ENCODE measurements at regions of chr9 and their contacts with region 1.

Region 1: DNA sequence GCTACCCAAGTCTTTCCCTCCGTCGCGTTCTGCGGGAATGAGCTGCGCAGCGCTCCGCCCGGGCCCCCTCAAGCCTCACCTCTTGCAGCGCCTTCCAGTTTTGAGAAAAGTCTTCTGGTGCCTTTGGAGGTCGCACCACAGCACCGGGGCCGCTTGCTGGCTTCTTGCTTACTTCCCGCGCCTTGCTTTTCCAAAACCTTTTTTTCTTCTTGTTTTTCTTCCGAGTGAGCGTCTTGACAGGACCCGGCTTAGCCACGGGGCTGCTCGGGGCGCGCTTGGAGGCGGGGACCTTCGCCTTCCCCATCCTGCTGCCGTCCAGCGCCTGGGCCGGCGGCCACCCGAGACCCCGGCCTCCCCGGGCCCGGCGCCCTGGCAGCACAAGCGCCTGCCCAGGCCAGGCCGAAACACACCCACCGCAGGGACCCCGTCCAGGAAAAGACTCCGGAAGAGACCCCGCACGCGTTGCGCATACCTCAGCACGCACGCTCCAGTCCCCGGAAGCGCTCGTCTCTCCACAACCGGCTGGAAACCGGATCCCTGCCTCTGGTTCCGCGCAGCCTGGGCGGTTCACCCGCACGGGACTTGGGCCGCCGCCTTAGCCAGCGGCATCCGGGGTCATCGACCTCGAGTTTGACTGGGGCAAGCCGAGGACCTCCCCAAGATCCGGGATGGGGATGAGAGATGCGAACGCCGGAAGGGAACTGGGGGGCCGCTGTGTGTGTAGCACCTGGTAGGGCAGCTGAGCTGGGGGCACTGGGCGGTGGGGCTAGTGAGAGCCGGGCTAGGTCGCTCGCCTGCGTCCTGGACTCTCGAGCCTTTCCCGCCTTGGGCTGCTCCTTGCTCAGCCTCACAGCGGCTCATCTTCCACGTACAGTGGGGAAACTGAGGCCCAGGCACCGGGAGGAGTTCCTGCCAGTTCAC is at the start of gene REXO4:
- DNase-seq: peak; percentile 96
- H3K4me3 ChIP-seq: peak within 1 kb of the TSS; percentile 69 to 88 (median 80)
- H3K27ac ChIP-seq: peak within 1 kb of the TSS; percentile 79 to 85 (median 84)
- H3K4me1 ChIP-seq: peaks cover 16 to 47% (median 33%) of the 10 kb centered on the region in 4 donors
- H3K27me3 ChIP-seq: no peaks in the 10 kb centered on the region
- CTCF ChIP-seq: peak in 1 of 3 experiments; percentile 19
- EP300 ChIP-seq: no peak
- POLR2A ChIP-seq: peak; percentile 12
- total RNA-seq, gene REXO4: 15.0 to 28.9 (median 22.4) TPM

Region 2: DNA sequence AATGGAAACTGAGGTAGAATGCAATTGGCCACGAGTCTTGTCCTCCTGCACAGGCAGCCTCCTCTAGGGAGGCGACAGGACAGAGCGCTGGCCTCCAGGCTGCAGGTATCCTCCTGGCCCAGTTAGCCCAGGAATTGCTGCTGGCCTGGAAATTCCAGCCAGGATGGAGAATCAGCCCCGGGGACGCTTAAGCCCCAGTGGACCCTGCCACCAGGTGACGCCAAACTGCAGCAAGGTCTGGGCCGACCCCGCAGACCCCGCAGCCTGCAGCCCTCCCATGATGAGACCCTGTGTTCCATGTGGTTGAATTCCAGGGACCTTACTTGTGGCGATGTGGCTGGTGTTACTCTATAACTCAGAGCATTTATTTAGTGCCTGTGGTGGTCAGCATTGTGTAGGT is 49.3 kb after region 1 on chr9:
- intact Hi-C with region 1: loop called (anchors 5 kb)
- DNase-seq: no peak
- H3K4me3 ChIP-seq: no peak overlapping the region
- H3K27ac ChIP-seq: no peak overlapping the region
- H3K4me1 ChIP-seq: no peaks in the 10 kb centered on the region
- H3K27me3 ChIP-seq: no peaks in the 10 kb centered on the region
- CTCF ChIP-seq: no peak
- EP300 ChIP-seq: no peak
- POLR2A ChIP-seq: no peak

Region 3: DNA sequence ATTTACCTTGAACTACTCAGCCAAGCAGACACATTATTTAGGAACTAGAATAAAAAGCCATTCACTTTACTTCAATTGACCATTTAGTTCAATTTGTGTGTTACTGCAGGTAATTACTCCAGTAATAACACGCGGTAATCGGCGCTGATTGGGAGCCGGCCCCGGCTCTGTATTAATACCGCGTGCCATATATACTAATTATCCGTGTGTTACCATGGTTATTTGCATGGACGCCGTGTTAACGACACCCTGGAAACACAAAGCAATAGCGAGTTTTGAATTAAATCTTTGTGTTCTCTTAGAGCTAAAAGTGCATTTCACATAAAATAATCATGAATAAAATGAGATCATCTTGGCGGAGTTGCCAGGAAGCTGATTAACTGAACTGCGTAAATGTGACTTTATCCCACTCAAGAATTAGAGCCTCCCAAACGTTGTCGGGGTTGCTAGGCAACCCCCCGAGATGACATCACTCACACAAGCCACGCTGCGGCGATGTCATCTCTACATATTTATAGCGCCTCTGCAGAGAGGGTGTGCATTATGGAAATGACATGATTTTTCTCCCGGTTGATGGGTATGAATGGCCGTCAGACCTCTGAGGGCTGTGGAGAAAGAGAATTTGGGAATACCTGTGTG is 788.0 kb after region 1 on chr9:
- intact Hi-C with region 1: no loop called
- DNase-seq: no peak
- H3K4me3 ChIP-seq: no peak overlapping the region
- H3K27ac ChIP-seq: peak overlapping the region in 3 of 4 donors; percentile 4 to 23 (median 10)
- H3K4me1 ChIP-seq: peaks cover 27 to 41% (median 32%) of the 10 kb centered on the region in 4 donors
- H3K27me3 ChIP-seq: no peaks in the 10 kb centered on the region
- CTCF ChIP-seq: no peak
- EP300 ChIP-seq: no peak
- POLR2A ChIP-seq: no peak